ENCODE measurements at regions of chr2 and their contacts with region 1.

Region 1: DNA sequence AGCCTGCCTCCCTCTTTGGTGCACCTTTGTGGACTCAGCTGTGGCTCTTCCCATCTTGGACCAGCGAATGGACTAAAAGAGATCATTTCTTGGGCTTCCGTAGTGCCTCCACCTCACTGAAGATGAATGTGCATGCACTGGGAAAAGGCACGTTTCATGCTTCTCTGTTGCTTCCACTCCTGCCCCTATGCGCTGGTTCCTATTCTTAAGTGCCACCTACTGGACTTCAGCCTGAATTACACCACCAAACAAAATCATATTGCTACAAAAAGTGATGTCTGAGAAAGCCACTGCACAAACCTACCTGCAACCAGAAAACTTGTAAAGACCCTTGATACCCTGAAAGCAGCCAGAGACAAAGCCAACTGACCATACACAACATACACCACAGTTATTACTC is 695.6 kb downstream of the TSN start:
- DNase-seq: peak in 3 of 4 experiments; percentile 9 to 14 (median 13)
- ATAC-seq: no peak
- H3K4me3 ChIP-seq: no peak overlapping the region
- H3K27ac ChIP-seq: no peak overlapping the region
- H3K4me1 ChIP-seq: no peaks in the 10 kb centered on the region
- H3K27me3 ChIP-seq: no peaks in the 10 kb centered on the region
- CTCF ChIP-seq: peak; percentile 36 to 56 (median 56)
- EP300 ChIP-seq: no peak
- POLR2A ChIP-seq: no peak
- RAD21 ChIP-seq: peak; percentile 52 to 60

Region 2: DNA sequence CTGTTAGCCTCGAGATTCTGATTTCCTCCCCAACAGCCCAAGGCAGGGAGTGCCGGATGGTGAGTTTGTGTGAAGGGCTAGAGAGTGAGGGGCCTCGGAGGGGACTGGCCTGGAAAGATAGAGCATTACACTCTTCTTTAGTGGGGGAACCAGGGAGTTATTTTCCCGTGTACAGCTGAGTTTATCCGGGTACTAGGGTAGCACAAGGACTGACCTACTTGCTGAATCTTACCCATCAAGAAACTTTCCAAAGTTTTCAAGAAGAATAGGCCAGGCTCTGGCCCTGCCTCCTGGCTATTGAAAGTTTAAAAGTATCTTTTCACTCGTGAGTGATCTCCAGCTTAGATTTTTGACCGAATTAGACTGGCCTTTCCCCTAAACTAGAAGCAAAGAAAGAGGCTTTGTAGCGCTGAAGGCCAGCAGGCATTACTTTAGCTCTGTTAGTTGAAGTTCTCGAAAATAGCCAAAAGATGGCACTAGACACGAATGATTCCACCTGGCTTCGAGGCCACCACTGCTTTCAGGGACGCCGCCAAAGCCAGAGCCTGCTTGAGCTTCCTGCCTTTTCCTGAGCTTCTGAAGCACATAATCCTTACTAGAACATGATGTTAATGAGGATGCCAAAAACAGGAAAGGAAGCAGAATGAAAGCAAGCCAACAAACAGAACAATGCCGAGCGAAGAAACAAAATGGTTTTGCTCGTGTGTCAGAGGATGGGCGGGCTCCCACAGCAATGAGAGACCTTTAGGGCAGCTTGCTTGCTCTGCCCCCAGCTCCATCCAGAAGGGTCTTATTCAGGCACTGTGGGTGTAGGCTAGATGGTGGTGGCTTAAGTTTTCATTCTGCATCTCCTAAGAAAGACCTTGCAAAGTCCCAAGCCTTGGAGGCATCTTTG is 639.8 kb before region 1 on chr2:
- CTCF ChIA-PET with region 1: no interaction called
- POLR2A ChIA-PET with region 1: no interaction called
- in situ Hi-C with region 1: no loop called
- intact Hi-C with region 1: loop called (anchors 5 kb)
- DNase-seq: peak; percentile 21 to 64 (median 34)
- ATAC-seq: peak; percentile 97
- H3K4me3 ChIP-seq: no peak overlapping the region
- H3K27ac ChIP-seq: no peak overlapping the region
- H3K4me1 ChIP-seq: no peaks in the 10 kb centered on the region; a peak in 1 of 5 replicates
- H3K27me3 ChIP-seq: peaks cover 11 to 41% of the 10 kb centered on the region in 2 experiments; a peak in 4 of 5 replicates
- CTCF ChIP-seq: peak; percentile 67 to 72 (median 70)
- EP300 ChIP-seq: no peak
- POLR2A ChIP-seq: no peak
- RAD21 ChIP-seq: peak; percentile 73 to 82

Region 3: GRCh38 chr2:121897335-121897970 is 553.6 kb before region 1 on chr2:
- CTCF ChIA-PET with region 1: no interaction called
- POLR2A ChIA-PET with region 1: no interaction called
- in situ Hi-C with region 1: no loop called
- intact Hi-C with region 1: loop called (anchors 10 kb)
- DNase-seq: peak; percentile 63 to 69 (median 66)
- ATAC-seq: peak; percentile 89
- H3K4me3 ChIP-seq: no peak overlapping the region
- H3K27ac ChIP-seq: no peak overlapping the region
- H3K4me1 ChIP-seq: peaks cover 17% of the 10 kb centered on the region in 2 experiments; a peak in 4 of 5 replicates
- H3K27me3 ChIP-seq: peaks cover 0 to 8% of the 10 kb centered on the region in 2 experiments; a peak in 2 of 5 replicates
- CTCF ChIP-seq: peak; percentile 69 to 73 (median 71)
- EP300 ChIP-seq: no peak
- POLR2A ChIP-seq: no peak
- RAD21 ChIP-seq: peak; percentile 30 to 58; a peak in 3 of 4 replicates

Region 4: GRCh38 chr2:122191341-122191740 is 259.7 kb before region 1 on chr2:
- CTCF ChIA-PET with region 1: no interaction called
- POLR2A ChIA-PET with region 1: no interaction called
- in situ Hi-C with region 1: no loop called
- intact Hi-C with region 1: loop called (anchors 5 kb)
- DNase-seq: peak; percentile 44 to 51 (median 50)
- ATAC-seq: peak; percentile 89
- H3K4me3 ChIP-seq: no peak overlapping the region
- H3K27ac ChIP-seq: no peak overlapping the region
- H3K4me1 ChIP-seq: peaks cover 6 to 20% of the 10 kb centered on the region in 2 experiments; a peak in 3 of 5 replicates
- H3K27me3 ChIP-seq: peaks cover 0 to 14% of the 10 kb centered on the region in 2 experiments; a peak in 3 of 5 replicates
- CTCF ChIP-seq: peak; percentile 45 to 71 (median 60); a peak in 5 of 6 replicates
- EP300 ChIP-seq: no peak
- POLR2A ChIP-seq: no peak
- RAD21 ChIP-seq: peak; percentile 49 to 65

Region 5: DNA sequence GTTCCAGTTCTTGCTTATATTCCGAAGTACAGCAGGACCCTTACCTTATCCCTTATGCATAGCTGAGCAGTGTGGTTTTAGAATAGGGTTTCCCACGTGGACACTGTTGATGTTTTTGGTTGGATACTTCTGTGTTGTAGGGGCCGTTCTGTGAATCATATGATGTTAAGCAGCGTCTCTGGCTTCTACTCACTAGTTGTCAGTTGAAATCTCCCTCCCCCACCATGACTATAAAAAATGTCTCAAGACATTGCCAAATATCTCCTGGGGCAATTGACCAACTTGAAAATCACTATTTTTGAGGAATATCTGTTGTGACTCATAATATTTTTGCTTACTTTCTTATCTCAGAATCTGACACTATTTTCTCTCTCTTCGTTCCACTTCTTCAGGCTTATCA is 18.1 kb after region 1 on chr2:
- CTCF ChIA-PET with region 1: no interaction called
- POLR2A ChIA-PET with region 1: no interaction called
- in situ Hi-C with region 1: no loop called
- intact Hi-C with region 1: no loop called
- DNase-seq: no peak
- ATAC-seq: no peak
- H3K4me3 ChIP-seq: no peak overlapping the region
- H3K27ac ChIP-seq: no peak overlapping the region
- H3K4me1 ChIP-seq: no peaks in the 10 kb centered on the region
- H3K27me3 ChIP-seq: no peaks in the 10 kb centered on the region
- CTCF ChIP-seq: no peak
- EP300 ChIP-seq: no peak
- POLR2A ChIP-seq: no peak
- RAD21 ChIP-seq: no peak

Region 6: GRCh38 chr2:122680662-122681061 is 229.6 kb after region 1 on chr2:
- CTCF ChIA-PET with region 1: no interaction called
- POLR2A ChIA-PET with region 1: no interaction called
- in situ Hi-C with region 1: no loop called
- intact Hi-C with region 1: no loop called
- DNase-seq: no peak
- ATAC-seq: no peak
- H3K4me3 ChIP-seq: no peak overlapping the region
- H3K27ac ChIP-seq: no peak overlapping the region
- H3K4me1 ChIP-seq: no peaks in the 10 kb centered on the region
- H3K27me3 ChIP-seq: no peaks in the 10 kb centered on the region
- CTCF ChIP-seq: no peak
- EP300 ChIP-seq: no peak
- POLR2A ChIP-seq: no peak
- RAD21 ChIP-seq: no peak

Region 7: GRCh38 chr2:124121760-124122275 is 1670.8 kb after region 1 on chr2:
- CTCF ChIA-PET with region 1: no interaction called
- POLR2A ChIA-PET with region 1: no interaction called
- in situ Hi-C with region 1: no loop called
- intact Hi-C with region 1: no loop called
- DNase-seq: no peak
- ATAC-seq: no peak
- H3K4me3 ChIP-seq: no peak overlapping the region
- H3K27ac ChIP-seq: no peak overlapping the region
- H3K4me1 ChIP-seq: no peaks in the 10 kb centered on the region
- H3K27me3 ChIP-seq: no peaks in the 10 kb centered on the region
- CTCF ChIP-seq: no peak
- EP300 ChIP-seq: no peak
- POLR2A ChIP-seq: no peak
- RAD21 ChIP-seq: no peak